ENCODE measurements at regions of chr5 and their contacts with region 1.

Region 1: GRCh38 chr5:74766849-74767578 is at the starts of genes GFM2 and NSA2:
- DNase-seq: peak; percentile 71 to 95 (median 76)
- ATAC-seq: peak; percentile 93
- H3K4me3 ChIP-seq: peak within 1 kb of the TSS; percentile 87
- H3K27ac ChIP-seq: peak within 1 kb of the TSS; percentile 83
- H3K4me1 ChIP-seq: peaks cover 8 to 12% of the 10 kb centered on the region in 2 experiments; a peak in 4 of 5 replicates
- H3K27me3 ChIP-seq: no peaks in the 10 kb centered on the region
- CTCF ChIP-seq: no peak
- EP300 ChIP-seq: peak; percentile 52; the same call in 1 of the 2 replicates
- POLR2A ChIP-seq: peak; percentile 91
- RAD21 ChIP-seq: 0 out of 4 replicates have a peak, but pooled peaks of 1 of the 2 experiments have one; percentile 7
- polyA plus RNA-seq, gene GFM2: 32.8 to 74.3 TPM
- polyA plus RNA-seq, gene NSA2: 60.2 to 67.6 TPM

Region 2: GRCh38 chr5:74903165-74903787 is 136.3 kb after region 1 on chr5:
- CTCF ChIA-PET with region 1: no interaction called
- POLR2A ChIA-PET with region 1: no interaction called
- in situ Hi-C with region 1: no loop called
- intact Hi-C with region 1: loop called (anchors 1 kb)
- DNase-seq: peak in 3 of 4 experiments; percentile 22 to 35 (median 28)
- ATAC-seq: peak; percentile 96
- H3K4me3 ChIP-seq: no peak overlapping the region
- H3K27ac ChIP-seq: no peak overlapping the region
- H3K4me1 ChIP-seq: no peaks in the 10 kb centered on the region
- H3K27me3 ChIP-seq: no peaks in the 10 kb centered on the region
- CTCF ChIP-seq: peak; percentile 58 to 70 (median 59)
- EP300 ChIP-seq: no peak
- POLR2A ChIP-seq: no peak
- RAD21 ChIP-seq: peak in 1 of 2 experiments; percentile 47; a peak in 2 of 4 replicates

Measured in K562 (cell line).